Activated CD8-positive, alpha-beta T cell treated with anti-CD3 and anti-CD28 coated beads for 36 hours (primary cell): ENCODE measurements at regions of chr6 and their contacts with region 1.

Region 1: DNA sequence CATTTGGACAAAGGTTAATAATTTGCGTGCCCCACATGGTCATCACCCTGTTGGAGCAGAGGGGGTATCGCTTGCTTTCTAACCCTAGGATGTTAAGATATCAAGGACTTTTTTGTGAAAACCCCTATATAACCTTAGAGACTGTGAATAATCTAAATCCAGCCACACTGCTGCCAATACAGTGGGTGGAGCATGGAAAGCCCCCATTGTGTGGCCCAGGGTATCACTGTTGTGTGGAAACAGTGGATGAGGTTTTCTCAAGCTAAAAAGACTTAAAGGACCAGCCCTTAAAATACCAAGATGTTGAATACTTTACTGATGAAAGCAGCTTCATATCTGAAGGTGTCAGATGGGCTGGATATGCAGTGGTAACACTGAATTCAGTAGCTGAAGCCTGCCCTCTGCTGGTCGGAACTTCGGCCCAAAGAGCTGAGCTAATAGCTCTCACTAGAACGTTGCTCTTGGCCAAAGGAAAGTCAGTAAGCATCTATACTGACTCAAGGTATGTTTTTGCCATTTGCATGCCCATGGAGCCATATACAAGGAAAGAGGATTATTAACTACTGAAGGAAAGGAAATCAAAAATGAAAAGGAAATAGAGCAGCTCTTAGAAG is 695.2 kb downstream of the PHF3 start:
- DNase-seq: peak; percentile 69
- ATAC-seq: no peak
- H3K4me3 Mint-ChIP-seq: no peak overlapping the region
- H3K27ac Mint-ChIP-seq: no peak overlapping the region
- H3K4me1 Mint-ChIP-seq: no peaks in the 10 kb centered on the region
- H3K27me3 Mint-ChIP-seq: no peaks in the 10 kb centered on the region
- CTCF ChIP-seq: peak; percentile 31

Region 2: DNA sequence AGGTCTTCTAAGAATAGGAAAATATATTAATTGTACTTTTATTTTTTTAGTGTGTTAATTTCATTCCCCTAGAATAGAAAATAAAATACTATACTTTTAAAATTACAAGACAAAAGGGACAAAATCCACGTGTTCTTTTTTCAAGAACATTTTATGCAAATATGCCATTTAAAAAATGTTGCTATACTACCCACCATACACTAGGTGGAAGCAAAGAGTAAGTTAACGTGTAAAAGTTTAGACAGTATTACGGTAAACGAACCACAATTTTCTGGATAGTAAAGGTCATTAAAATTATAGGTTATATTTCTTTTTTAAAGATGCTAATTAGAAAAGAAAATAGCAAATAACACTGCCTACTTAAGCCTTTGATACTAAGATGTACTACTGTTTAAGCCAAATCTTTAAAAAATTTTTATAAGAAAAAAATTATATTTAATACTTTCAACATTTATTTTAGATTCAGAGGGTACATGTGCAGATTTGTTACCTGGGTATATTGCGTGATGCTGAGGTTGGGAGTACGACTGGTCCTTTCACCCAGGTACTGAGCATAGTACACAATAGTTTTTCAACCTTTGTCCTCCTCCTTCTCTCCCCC is 407.6 kb before region 1 on chr6:
- CTCF ChIA-PET with region 1: interaction called, 4 read pairs
- POLR2A ChIA-PET with region 1: no interaction called
- intact Hi-C with region 1: loop called (anchors 5 kb)
- DNase-seq: no peak
- ATAC-seq: no peak
- H3K4me3 Mint-ChIP-seq: no peak overlapping the region
- H3K27ac Mint-ChIP-seq: no peak overlapping the region
- H3K4me1 Mint-ChIP-seq: no peaks in the 10 kb centered on the region
- H3K27me3 Mint-ChIP-seq: peaks cover 3% of the 10 kb centered on the region
- CTCF ChIP-seq: peak; percentile 57

Region 3: DNA sequence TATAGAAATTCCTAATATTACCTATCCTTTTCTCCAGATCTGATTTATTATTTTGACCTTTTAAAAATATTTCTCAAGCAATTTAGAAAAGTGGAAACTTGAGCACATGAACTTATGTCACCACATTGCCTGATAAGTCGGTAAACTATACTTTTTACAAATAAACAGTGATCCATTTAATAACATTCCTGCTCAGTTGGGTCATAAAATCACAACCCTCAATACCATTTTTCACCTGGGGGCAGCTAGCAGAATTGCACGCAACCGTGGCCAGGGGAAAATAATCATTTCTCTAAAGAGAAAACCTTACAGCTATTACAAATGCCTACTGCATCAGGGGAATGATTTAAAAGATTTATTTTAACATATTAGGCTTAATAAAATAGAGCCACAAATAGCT is 80.7 kb before region 1 on chr6:
- CTCF ChIA-PET with region 1: no interaction called
- POLR2A ChIA-PET with region 1: interaction called, 10 read pairs
- intact Hi-C with region 1: no loop called
- DNase-seq: no peak
- ATAC-seq: no peak
- H3K4me3 Mint-ChIP-seq: no peak overlapping the region
- H3K27ac Mint-ChIP-seq: no peak overlapping the region
- H3K4me1 Mint-ChIP-seq: no peaks in the 10 kb centered on the region
- H3K27me3 Mint-ChIP-seq: no peaks in the 10 kb centered on the region
- CTCF ChIP-seq: no peak